Activated CD4-positive, alpha-beta T cell treated with anti-CD3 and anti-CD28 coated beads for 36 hours (primary cell): ENCODE measurements at regions of chr4 and their contacts with region 1.

Region 1: DNA sequence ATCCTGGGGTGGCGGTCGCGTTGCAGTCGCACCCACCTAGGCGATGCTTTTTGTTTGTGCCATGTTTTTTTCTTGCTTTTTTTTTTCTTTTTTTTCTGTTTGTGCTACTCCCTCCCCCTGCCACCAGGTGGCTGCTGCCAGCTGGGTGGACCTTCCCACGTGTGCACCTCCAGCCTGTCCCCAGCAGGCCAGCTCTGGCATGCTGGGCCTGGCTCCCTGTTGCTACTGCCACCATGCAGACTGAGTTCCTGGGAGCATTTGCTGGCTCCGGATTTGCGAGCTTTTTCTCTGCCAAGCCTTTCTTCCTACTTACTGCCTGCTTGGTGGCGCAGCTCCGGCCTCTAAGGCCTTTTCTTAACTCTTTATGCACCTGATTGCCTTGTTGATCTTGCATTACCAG is 161.2 kb upstream of the WDFY3 start:
- DNase-seq: peak; percentile 33
- ATAC-seq: peak; percentile 47
- H3K4me3 Mint-ChIP-seq: no peak overlapping the region
- H3K27ac Mint-ChIP-seq: no peak overlapping the region
- H3K4me1 Mint-ChIP-seq: no peaks in the 10 kb centered on the region
- H3K27me3 Mint-ChIP-seq: no peaks in the 10 kb centered on the region

Region 2: GRCh38 chr4:85747882-85748491 is 620.3 kb after region 1 on chr4:
- CTCF ChIA-PET with region 1: no interaction called
- POLR2A ChIA-PET with region 1: no interaction called
- intact Hi-C with region 1: loop called in 1 of 2 experiments (anchors 5 kb)
- DNase-seq: peak; percentile 14
- ATAC-seq: no peak
- H3K4me3 Mint-ChIP-seq: no peak overlapping the region
- H3K27ac Mint-ChIP-seq: no peak overlapping the region
- H3K4me1 Mint-ChIP-seq: no peaks in the 10 kb centered on the region
- H3K27me3 Mint-ChIP-seq: no peaks in the 10 kb centered on the region